B cell (primary cell): ENCODE measurements at regions of chr11 and their contacts with region 1.

Region 1: DNA sequence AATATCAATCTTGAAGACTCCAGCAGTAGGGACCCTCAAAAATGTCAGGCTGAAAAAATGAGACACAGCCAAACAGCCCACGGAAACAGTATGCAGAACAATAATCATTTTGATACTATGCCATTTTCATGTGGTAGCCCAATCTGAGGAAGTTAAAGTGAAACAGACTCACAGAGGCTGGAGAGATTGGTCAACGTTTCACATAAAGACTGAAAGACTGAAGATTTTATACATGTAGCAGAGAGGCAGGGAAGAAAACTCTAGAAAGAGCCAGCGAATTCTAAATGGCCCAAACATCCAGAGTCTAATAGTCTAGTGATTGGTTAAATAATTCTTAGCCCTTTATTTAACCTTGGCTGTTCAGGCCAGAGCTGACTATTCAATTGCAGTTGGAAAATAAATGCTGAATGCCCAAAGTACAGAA is 49.4 kb downstream of the MAML2 start:
- DNase-seq: peak; percentile 51
- ATAC-seq: peak; percentile 80
- H3K4me3 ChIP-seq: peak overlapping the region in 1 of 5 experiments; percentile 35
- H3K4me3 Mint-ChIP-seq: peak overlapping the region; percentile 55
- H3K27ac ChIP-seq: peak overlapping the region in 1 of 2 donors; percentile 48
- H3K27ac Mint-ChIP-seq: peak overlapping the region; percentile 38
- H3K4me1 ChIP-seq: peaks cover 14 to 19% of the 10 kb centered on the region in 2 donors
- H3K4me1 Mint-ChIP-seq: peaks cover 36% of the 10 kb centered on the region
- H3K27me3 ChIP-seq: no peaks in the 10 kb centered on the region
- H3K27me3 Mint-ChIP-seq: no peaks in the 10 kb centered on the region
- CTCF ChIP-seq: no peak

Region 2: GRCh38 chr11:96162816-96163499 is 130.7 kb before region 1 on chr11:
- CTCF ChIA-PET with region 1: no interaction called
- POLR2A ChIA-PET with region 1: no interaction called
- intact Hi-C with region 1: no loop called
- DNase-seq: no peak
- ATAC-seq: no peak
- H3K4me3 ChIP-seq: no peak overlapping the region
- H3K4me3 Mint-ChIP-seq: no peak overlapping the region
- H3K27ac ChIP-seq: no peak overlapping the region
- H3K27ac Mint-ChIP-seq: no peak overlapping the region
- H3K4me1 ChIP-seq: no peaks in the 10 kb centered on the region
- H3K4me1 Mint-ChIP-seq: peaks cover 13% of the 10 kb centered on the region
- H3K27me3 ChIP-seq: no peaks in the 10 kb centered on the region
- H3K27me3 Mint-ChIP-seq: no peaks in the 10 kb centered on the region
- CTCF ChIP-seq: no peak

Region 3: DNA sequence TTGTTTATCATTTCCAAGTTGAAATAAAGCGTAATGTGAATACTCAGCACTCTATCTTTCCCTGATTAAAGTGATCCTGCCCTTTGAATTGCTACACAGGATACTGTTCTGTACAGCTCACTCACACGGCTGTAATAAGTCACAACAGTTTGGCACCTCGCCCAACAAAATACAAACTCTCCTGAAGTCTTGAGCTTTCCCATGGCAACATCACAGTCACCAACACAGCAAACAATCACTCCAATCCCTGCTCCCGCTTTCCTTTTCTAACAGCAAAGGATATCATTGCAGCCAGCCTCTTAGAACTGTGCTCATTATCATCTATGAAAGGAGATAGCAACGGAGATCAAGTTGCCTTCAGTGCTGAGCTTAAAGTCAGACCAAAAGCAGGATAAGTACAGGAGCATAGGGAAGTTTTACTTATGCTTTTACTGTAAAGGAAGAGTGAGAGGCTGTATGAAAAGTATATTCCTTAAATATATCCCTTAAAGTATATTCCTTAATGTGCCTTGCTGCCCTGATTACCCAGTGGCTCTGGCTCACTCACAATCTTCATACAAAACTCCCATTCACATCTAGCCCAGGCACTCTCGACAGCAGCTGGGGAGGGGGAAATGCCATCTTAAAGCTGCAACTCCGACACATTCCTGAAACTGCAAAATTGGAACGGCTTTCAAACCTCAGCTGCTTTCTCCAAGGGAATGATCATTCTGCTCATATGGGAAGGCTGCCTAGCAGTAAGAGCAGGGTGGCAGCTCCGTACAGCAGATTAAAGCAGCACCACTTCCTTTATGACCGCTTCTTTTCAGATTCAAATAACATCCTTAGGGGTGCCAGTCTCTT is 13.5 kb after region 1 on chr11:
- CTCF ChIA-PET with region 1: interaction called, 3 read pairs
- POLR2A ChIA-PET with region 1: no interaction called
- intact Hi-C with region 1: loop called (anchors 2 kb)
- DNase-seq: no peak
- ATAC-seq: no peak
- H3K4me3 ChIP-seq: no peak overlapping the region
- H3K4me3 Mint-ChIP-seq: peak overlapping the region; percentile 40
- H3K27ac ChIP-seq: no peak overlapping the region
- H3K27ac Mint-ChIP-seq: no peak overlapping the region
- H3K4me1 ChIP-seq: no peaks in the 10 kb centered on the region
- H3K4me1 Mint-ChIP-seq: peaks cover 41% of the 10 kb centered on the region
- H3K27me3 ChIP-seq: no peaks in the 10 kb centered on the region
- H3K27me3 Mint-ChIP-seq: no peaks in the 10 kb centered on the region
- CTCF ChIP-seq: no peak